Lower lobe of right lung (tissue), 2 donors: ENCODE measurements at regions of chr12 and their contacts with region 1.

Region 1: GRCh38 chr12:14365294-14366208 is at the start of gene ATF7IP:
- DNase-seq: peak; percentile 96
- ATAC-seq: peak; percentile 97 to 99
- H3K4me3 ChIP-seq: peak within 1 kb of the TSS; percentile 69
- H3K27ac ChIP-seq: peak within 1 kb of the TSS; percentile 98
- H3K4me1 ChIP-seq: peaks cover 15% of the 10 kb centered on the region
- H3K27me3 ChIP-seq: no peaks in the 10 kb centered on the region
- CTCF ChIP-seq: peak; percentile 24
- total RNA-seq, gene ATF7IP: 76.9 TPM

Region 2: DNA sequence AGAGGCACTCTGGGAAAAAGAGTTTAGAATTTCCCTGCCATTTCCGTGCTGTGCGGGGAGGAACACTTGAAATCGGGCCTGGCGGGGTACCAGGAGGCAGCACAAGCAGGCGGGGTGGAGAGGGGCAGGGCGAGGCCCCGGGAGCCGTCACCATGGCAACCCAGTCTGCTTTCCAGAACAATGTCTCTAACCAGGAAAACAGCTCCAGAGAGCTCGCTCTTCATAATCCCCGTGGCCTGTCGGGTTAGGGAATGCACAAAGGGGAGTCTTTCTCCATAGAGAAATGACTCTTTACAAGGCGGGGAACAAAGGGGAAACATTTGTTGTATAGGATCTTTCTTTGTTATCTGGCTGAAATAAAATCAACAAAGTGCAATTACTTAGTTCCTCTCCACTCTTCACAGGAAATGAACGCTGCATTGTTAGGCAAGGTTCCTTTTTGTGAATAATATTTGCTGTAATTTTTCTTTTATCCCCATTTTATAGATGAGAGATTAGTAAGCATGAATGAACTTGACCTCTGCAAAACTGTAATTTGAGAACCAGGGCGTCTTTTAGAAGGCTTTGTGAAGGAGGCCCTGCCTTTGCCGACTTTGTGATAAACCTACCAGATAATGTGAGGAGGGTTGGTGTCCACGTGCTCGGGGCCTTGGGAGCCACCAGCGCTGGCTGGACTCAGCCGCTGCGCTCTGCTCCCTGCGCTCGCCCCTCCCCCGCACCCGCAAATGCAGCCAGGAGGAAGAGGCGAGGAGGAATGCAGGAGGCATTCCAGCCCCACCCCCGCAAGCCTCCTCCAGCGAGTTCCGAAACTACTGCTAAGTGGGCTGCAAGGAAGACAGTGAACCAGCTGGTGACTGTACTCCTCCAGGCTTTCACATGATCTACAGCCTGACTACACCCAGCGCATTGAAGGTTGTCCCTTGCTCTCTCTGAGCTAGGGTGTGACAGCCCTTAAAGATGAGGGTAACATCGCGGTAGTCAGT is 105.2 kb before region 1 on chr12:
- intact Hi-C with region 1: loop called (anchors 10 kb)
- DNase-seq: peak; percentile 95
- ATAC-seq: peak; percentile 82 to 83
- H3K4me3 ChIP-seq: peak overlapping the region; percentile 31
- H3K27ac ChIP-seq: peak overlapping the region; percentile 92
- H3K4me1 ChIP-seq: peaks cover 59% of the 10 kb centered on the region
- H3K27me3 ChIP-seq: no peaks in the 10 kb centered on the region
- CTCF ChIP-seq: no peak